ENCODE measurements at regions of chr20 and their contacts with region 1.

Region 1: DNA sequence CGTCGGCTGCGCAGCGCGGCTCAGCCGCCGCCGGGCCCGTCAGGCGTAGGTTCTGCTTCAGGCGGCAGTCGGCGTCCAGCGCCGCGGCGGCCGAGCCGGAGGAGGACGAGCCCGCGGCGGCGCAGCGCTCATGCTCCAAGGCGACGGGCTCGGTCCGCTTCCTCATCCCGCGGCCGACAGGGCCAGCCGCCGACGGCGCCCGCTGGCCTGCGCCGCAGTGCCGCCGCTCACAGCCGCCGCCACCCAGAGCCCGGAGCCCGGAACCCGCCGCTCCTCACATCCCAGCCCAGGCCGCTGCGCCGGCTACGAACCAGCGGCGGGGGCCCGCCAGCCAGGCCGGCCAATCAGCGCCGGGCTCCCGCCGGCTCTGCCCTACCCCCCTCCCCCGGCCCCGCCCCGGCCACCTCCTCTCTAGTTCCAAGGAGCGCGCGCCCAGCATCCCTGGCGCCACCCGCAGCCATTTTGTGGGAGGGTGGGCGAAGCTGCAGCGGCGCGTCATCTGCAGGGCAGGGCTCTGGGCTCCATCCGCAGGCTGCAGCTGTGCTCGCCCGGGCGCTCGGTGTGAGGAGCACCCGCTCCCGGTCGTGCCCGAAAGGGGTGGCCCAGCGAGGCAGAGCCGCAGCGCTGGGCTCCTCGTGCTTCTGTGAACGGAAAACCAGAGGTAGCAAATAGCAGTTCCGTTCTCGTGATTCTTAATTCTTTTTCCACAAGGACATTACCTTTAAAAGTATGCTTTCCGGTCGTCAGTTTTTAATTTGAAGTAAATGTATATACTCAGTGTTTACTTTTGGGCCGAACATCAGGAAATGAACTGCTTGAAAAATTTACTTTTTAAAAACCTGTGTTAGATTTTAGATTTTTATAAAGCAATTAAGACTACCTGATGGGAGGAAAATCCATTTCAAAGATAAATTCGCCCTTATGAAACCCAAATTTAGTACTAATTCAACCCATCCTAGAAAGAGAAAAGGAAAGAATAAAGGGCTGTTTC is at the start of gene ABHD12:
- DNase-seq: peak; percentile 94
- H3K4me3 Mint-ChIP-seq: peak within 1 kb of the TSS; percentile 86
- H3K27ac Mint-ChIP-seq: peak within 1 kb of the TSS; percentile 90
- H3K4me1 Mint-ChIP-seq: peaks cover 11% of the 10 kb centered on the region
- H3K27me3 Mint-ChIP-seq: no peaks in the 10 kb centered on the region
- total RNA-seq, gene ABHD12: 29.0 and 29.5 TPM in 2 replicates

Region 2: DNA sequence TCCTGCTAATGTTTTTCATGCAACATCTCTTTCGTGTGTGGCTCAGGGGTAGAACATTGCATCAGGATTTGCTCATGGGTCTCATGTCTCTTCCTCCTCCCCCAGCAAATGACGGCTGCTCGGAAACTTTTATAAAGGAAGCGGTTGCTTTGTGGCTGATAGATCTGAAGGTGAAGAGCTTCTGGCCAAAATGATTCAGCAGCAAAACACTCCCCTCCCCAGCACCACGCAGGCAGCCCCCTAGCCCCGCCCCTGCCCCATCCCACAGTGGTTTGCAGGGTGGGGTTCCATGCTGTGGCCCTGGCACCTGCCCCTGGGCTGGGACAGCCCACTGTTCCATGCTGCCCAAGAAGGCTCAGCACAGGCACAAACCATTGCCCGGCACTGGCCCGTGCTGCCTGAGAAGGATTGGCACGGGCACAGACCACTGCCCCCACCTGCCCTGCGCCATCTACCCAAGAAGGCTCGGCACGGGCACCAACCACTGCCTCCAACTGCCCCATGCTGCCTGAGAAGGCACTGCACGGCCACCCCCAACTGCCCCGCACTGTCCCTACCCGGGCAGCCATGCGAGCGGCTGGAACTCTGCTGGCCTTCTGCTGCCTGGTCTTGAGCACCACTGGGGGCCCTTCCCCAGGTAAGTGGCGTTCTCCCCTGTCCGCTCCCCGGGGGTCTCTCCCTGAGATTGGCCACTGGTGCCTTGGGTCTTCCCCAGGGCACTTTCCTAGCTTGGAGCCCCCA is 441.7 kb before region 1 on chr20 and contains the start of gene CST7:
- intact Hi-C with region 1: loop called (anchors 5 kb)
- DNase-seq: peak; percentile 83
- H3K4me3 Mint-ChIP-seq: peak within 1 kb of the TSS; percentile 94
- H3K27ac Mint-ChIP-seq: peak within 1 kb of the TSS; percentile 96
- H3K4me1 Mint-ChIP-seq: peaks cover 57% of the 10 kb centered on the region
- H3K27me3 Mint-ChIP-seq: no peaks in the 10 kb centered on the region
- total RNA-seq, gene CST7: 115 and 121 TPM in 2 replicates

Region 3: GRCh38 chr20:25057234-25058050 is 333.4 kb before region 1 on chr20:
- intact Hi-C with region 1: loop called (anchors 1 kb)
- DNase-seq: peak; percentile 78
- H3K4me3 Mint-ChIP-seq: peak overlapping the region; percentile 76
- H3K27ac Mint-ChIP-seq: peak overlapping the region; percentile 64
- H3K4me1 Mint-ChIP-seq: peaks cover 30% of the 10 kb centered on the region
- H3K27me3 Mint-ChIP-seq: peaks cover 18% of the 10 kb centered on the region

Region 4: GRCh38 chr20:25310268-25310920 is 80.4 kb before region 1 on chr20:
- intact Hi-C with region 1: loop called (anchors 2 kb)
- DNase-seq: peak; percentile 59
- H3K4me3 Mint-ChIP-seq: peak overlapping the region; percentile 74
- H3K27ac Mint-ChIP-seq: peak overlapping the region; percentile 95
- H3K4me1 Mint-ChIP-seq: peaks cover 36% of the 10 kb centered on the region
- H3K27me3 Mint-ChIP-seq: no peaks in the 10 kb centered on the region

Region 5: DNA sequence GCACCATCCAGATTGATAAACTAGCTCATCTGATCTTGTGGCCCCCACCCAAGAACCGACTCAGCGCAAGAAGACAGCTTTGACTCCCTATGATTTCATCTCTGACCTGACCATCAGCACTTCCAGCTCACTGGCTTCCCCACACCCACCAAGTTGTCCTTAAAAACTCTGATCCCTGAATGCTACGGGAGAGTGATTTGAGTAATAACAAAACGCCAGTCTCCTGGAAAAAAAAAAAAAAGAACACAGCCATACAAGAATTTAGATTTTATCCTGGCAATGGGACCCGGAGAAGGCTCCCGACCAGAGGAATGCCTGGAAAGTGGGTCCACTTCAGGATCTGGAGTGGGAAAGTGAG is 63.0 kb before region 1 on chr20:
- intact Hi-C with region 1: no loop called
- DNase-seq: no peak
- H3K4me3 Mint-ChIP-seq: no peak overlapping the region
- H3K27ac Mint-ChIP-seq: no peak overlapping the region
- H3K4me1 Mint-ChIP-seq: peaks cover 4% of the 10 kb centered on the region
- H3K27me3 Mint-ChIP-seq: no peaks in the 10 kb centered on the region

Region 6: GRCh38 chr20:25372584-25373336 is 18.1 kb before region 1 on chr20:
- intact Hi-C with region 1: no loop called
- DNase-seq: no peak
- H3K4me3 Mint-ChIP-seq: no peak overlapping the region
- H3K27ac Mint-ChIP-seq: no peak overlapping the region
- H3K4me1 Mint-ChIP-seq: peaks cover 10% of the 10 kb centered on the region
- H3K27me3 Mint-ChIP-seq: no peaks in the 10 kb centered on the region

Region 7: GRCh38 chr20:25407311-25408169 is 16.7 kb after region 1 on chr20 and contains the start of gene GINS1:
- intact Hi-C with region 1: loop called (anchors 1 kb)
- DNase-seq: peak; percentile 86
- H3K4me3 Mint-ChIP-seq: peak within 1 kb of the TSS; percentile 93
- H3K27ac Mint-ChIP-seq: peak within 1 kb of the TSS; percentile 92
- H3K4me1 Mint-ChIP-seq: peaks cover 20% of the 10 kb centered on the region
- H3K27me3 Mint-ChIP-seq: no peaks in the 10 kb centered on the region
- total RNA-seq, gene GINS1: 33.5 and 36.3 TPM in 2 replicates

Region 8: DNA sequence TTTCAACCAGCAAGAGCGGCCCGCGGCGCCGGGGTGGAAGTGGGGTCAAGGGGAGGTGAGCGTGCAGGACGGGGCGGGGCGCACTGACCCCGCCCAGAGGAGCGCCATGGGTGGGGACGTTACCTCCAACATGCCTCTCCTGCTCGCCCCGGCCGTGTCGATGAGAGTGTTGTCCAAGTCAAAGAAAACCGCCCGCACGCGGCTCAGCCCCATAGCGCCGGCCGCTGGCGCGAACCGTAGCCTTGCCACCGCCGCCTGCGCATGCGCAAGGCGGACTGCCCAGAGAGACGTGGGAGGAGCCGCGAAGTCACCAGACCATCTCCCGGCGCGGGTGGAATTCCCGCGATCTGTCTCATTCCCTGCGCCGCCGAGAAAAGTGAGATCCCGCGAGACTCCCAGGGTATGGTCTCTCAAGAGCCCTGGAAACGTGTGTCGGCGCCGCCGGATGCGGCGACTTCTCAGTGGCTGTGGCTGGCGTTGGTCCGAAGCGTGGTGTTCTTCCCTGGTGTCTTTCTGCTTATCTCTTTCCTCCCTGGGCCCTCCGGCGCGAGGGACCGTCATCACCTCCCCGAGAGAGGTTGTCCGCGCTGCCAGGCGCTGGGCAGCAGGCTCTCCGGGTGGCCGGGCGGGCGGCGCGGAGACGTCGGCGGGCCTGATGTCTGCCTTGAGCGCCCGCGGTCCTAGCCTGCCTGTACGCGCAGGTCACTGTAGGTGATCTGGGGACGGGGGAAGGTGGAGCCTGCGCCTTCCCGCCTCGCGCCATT is 233.1 kb after region 1 on chr20 and contains the start of gene NANP:
- intact Hi-C with region 1: loop called (anchors 10 kb)
- DNase-seq: peak; percentile 89
- H3K4me3 Mint-ChIP-seq: peak within 1 kb of the TSS; percentile 89
- H3K27ac Mint-ChIP-seq: peak within 1 kb of the TSS; percentile 95
- H3K4me1 Mint-ChIP-seq: peaks cover 26% of the 10 kb centered on the region
- H3K27me3 Mint-ChIP-seq: no peaks in the 10 kb centered on the region
- total RNA-seq, gene NANP: 7.9 and 9.1 TPM in 2 replicates